HepG2 (cell line): ENCODE measurements at regions of chr17 and their contacts with region 1.

Region 1: DNA sequence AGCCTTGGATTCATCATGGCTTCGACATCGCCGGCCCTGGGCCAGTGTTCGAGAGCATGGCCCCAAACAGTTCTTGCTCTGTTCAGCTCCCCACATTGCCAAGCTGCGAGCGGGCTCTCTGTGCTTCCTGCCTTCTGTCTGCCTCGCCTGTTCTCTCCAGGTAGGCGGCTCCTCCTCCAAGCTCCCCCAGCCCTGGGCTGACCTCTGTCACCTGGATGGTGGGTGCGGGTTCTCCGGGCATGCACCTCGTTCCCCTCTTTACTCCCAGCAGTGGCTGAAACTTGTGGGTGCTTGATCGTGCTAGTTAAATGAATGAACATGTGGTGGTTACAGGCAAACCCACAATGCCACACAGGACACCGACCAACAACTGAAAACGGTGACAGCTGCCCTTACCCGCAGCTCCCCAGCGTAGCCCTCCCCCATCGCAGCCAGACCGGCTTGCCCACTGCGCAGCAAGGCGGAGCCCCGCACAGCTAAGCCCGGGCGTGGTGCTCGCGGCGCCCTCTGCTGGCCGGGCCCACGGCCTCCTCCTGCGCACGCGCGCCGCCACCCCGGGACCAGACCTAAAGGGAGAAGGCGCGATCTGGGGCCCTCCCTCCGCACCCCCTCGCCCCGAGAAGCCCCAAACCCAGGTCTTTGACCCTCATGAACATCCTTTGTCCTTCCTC is 23.0 kb upstream of the EIF1 start:
- DNase-seq: peak; percentile 68
- ATAC-seq: peak; percentile 87
- H3K4me3 ChIP-seq: peak overlapping the region; percentile 54 to 80 (median 55)
- H3K27ac ChIP-seq: no peak overlapping the region
- H3K4me1 ChIP-seq: peaks cover 47% of the 10 kb centered on the region
- H3K27me3 ChIP-seq: peaks cover 0 to 16% of the 10 kb centered on the region in 2 experiments; a peak in 2 of 5 replicates
- CTCF ChIP-seq: peak; percentile 96
- EP300 ChIP-seq: no peak
- POLR2A ChIP-seq: peak in 1 of 2 experiments; percentile 66; a peak in 2 of 4 replicates
- RAD21 ChIP-seq: peak; percentile 54

Region 2: GRCh38 chr17:40615295-40615988 is 1050.3 kb before region 1 on chr17:
- CTCF ChIA-PET with region 1: interaction called, 8 read pairs
- POLR2A ChIA-PET with region 1: interaction called, 3 read pairs
- in situ Hi-C with region 1: loop called (anchors 5 kb)
- intact Hi-C with region 1: loop called (anchors 10 kb)
- DNase-seq: peak; percentile 76
- ATAC-seq: peak; percentile 85
- H3K4me3 ChIP-seq: no peak overlapping the region
- H3K27ac ChIP-seq: no peak overlapping the region
- H3K4me1 ChIP-seq: peaks cover 55% of the 10 kb centered on the region
- H3K27me3 ChIP-seq: peaks cover 1 to 20% of the 10 kb centered on the region in 2 experiments; a peak in 3 of 5 replicates
- CTCF ChIP-seq: peak; percentile 96
- EP300 ChIP-seq: no peak
- POLR2A ChIP-seq: no peak
- RAD21 ChIP-seq: peak; percentile 95

Region 3: DNA sequence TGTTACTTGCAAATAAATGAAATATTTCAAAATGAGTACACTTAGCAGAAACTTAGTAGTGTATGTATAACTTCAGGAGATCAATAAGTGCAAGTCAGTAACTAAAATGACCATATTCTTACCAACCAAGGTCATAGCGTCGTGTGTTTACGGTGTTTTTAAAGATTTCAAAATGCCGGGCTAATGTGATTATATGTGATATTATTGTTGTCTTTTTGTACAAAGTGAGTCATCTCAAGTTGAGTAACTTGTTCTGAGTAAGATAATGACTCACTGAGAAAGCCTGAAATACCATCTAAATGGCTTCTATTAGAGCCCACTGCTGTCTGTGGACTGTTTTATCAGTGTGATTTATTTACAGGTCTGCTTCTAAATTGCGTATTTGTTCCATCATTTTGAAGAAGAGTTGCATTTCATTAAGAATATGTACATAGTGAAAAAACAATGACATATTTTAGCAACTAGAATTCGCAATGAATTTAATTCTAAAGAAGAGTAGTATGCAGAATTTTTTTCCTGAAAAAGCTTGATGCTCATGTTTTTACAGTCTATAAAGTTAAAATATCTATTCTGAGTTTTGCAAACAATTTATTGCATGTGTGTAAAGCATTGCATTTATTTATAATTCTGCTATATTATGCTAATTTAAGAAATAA is 811.4 kb before region 1 on chr17:
- CTCF ChIA-PET with region 1: interaction called, 12 read pairs
- POLR2A ChIA-PET with region 1: interaction called, 3 read pairs
- in situ Hi-C with region 1: no loop called
- intact Hi-C with region 1: no loop called
- DNase-seq: peak; percentile 55
- ATAC-seq: peak; percentile 46; the same call in 1 of the 3 replicates
- H3K4me3 ChIP-seq: no peak overlapping the region
- H3K27ac ChIP-seq: no peak overlapping the region
- H3K4me1 ChIP-seq: peaks cover 10% of the 10 kb centered on the region; the same call in 1 of the 2 replicates
- H3K27me3 ChIP-seq: 0 out of 5 replicates have a peak, but pooled peaks cover 0 to 3% of the 10 kb centered on the region in 2 experiments
- CTCF ChIP-seq: no peak
- EP300 ChIP-seq: peak in 1 of 2 experiments; percentile 66; a peak in 2 of 4 replicates
- POLR2A ChIP-seq: no peak
- RAD21 ChIP-seq: no peak

Region 4: DNA sequence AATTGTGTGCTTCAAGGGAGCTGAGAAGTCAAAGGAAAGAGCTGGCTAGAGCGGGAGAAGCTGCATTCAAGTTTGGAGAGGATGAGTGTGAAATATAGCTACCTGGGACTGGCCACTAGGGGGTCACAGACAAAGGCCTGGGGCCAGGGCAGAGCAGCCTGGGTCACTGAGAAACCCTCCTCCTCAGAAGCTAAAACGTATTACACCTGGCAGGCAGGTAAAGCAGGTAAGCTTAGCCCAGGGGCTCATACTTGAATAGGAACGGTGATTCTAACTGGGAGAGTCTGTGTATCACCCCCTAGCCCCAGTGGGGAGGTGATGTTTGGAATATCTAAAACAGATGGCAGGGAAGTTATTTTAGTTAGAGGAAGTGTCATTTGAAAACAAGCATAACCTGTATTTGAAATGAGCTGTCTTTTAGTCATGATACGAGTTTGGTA is 248.1 kb before region 1 on chr17:
- CTCF ChIA-PET with region 1: no interaction called
- POLR2A ChIA-PET with region 1: no interaction called
- in situ Hi-C with region 1: no loop called
- intact Hi-C with region 1: loop called (anchors 5 kb)
- DNase-seq: peak; percentile 30
- ATAC-seq: peak; percentile 69
- H3K4me3 ChIP-seq: no peak overlapping the region
- H3K27ac ChIP-seq: no peak overlapping the region
- H3K4me1 ChIP-seq: peaks cover 62% of the 10 kb centered on the region
- H3K27me3 ChIP-seq: no peaks in the 10 kb centered on the region
- CTCF ChIP-seq: peak; percentile 58
- EP300 ChIP-seq: no peak
- POLR2A ChIP-seq: no peak
- RAD21 ChIP-seq: peak; percentile 21; the same call in 1 of the 2 replicates

Region 5: GRCh38 chr17:41579484-41580243 is 86.0 kb before region 1 on chr17:
- CTCF ChIA-PET with region 1: interaction called, 10 read pairs
- POLR2A ChIA-PET with region 1: no interaction called
- in situ Hi-C with region 1: no loop called
- intact Hi-C with region 1: no loop called
- DNase-seq: peak; percentile 85
- ATAC-seq: peak; percentile 89
- H3K4me3 ChIP-seq: no peak overlapping the region
- H3K27ac ChIP-seq: no peak overlapping the region
- H3K4me1 ChIP-seq: no peaks in the 10 kb centered on the region
- H3K27me3 ChIP-seq: peaks cover 0 to 4% of the 10 kb centered on the region in 2 experiments; a peak in 2 of 5 replicates
- CTCF ChIP-seq: peak; percentile 90
- EP300 ChIP-seq: no peak
- POLR2A ChIP-seq: no peak
- RAD21 ChIP-seq: peak; percentile 59

Region 6: DNA sequence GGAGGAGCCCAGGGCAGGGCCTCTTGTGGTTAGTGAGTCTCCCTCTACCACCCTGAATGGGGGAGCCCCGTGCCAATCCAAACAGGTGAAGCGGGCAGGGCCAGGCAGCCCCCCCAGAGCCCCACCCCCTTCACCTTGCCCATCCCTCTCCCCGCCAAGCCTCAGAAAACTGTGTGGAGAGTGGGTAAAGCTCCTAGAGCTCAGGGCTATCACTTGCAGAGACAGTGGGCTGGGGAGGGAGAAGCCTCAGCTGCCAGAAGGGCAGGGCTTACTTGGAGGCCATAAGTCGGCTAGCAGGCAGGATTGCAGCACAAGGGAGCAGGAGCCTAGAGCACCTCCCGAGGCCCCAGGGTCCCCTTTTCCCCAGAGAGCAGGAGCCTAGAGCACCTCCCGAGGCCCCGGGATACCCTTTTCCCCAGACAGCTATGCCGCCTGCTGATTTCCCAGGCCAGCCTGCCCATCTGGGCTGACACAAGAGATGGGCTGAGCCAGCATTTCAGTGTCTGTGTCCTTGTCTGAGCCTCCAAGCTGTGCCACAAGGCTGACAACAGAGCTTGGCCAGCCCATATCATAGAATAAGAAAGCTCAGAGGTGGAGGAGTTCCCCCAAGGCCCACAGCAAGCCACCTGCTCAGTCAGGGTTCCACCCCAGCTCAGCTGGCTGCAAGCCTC is 72.3 kb before region 1 on chr17:
- CTCF ChIA-PET with region 1: interaction called, 12 read pairs
- POLR2A ChIA-PET with region 1: no interaction called
- in situ Hi-C with region 1: no loop called
- intact Hi-C with region 1: loop called (anchors 10 kb)
- DNase-seq: no peak
- ATAC-seq: no peak; the same call in 2 of the 3 replicates
- H3K4me3 ChIP-seq: no peak overlapping the region
- H3K27ac ChIP-seq: no peak overlapping the region
- H3K4me1 ChIP-seq: no peaks in the 10 kb centered on the region
- H3K27me3 ChIP-seq: peaks cover 4 to 42% of the 10 kb centered on the region in 2 experiments; a peak in 3 of 5 replicates
- CTCF ChIP-seq: no peak
- EP300 ChIP-seq: no peak
- POLR2A ChIP-seq: no peak
- RAD21 ChIP-seq: no peak

Region 7: GRCh38 chr17:41625602-41626001 is 40.1 kb before region 1 on chr17:
- CTCF ChIA-PET with region 1: no interaction called
- POLR2A ChIA-PET with region 1: no interaction called
- in situ Hi-C with region 1: no loop called
- intact Hi-C with region 1: no loop called
- DNase-seq: no peak
- ATAC-seq: no peak
- H3K4me3 ChIP-seq: no peak overlapping the region
- H3K27ac ChIP-seq: no peak overlapping the region
- H3K4me1 ChIP-seq: no peaks in the 10 kb centered on the region; the same call in 1 of the 2 replicates
- H3K27me3 ChIP-seq: peaks cover 9 to 47% of the 10 kb centered on the region in 2 experiments; a peak in 4 of 5 replicates
- CTCF ChIP-seq: no peak
- EP300 ChIP-seq: no peak
- POLR2A ChIP-seq: no peak
- RAD21 ChIP-seq: no peak

Region 8: GRCh38 chr17:41648411-41649195 is 17.1 kb before region 1 on chr17:
- CTCF ChIA-PET with region 1: interaction called, 242 read pairs
- POLR2A ChIA-PET with region 1: interaction called, 4 read pairs
- in situ Hi-C with region 1: no loop called
- intact Hi-C with region 1: loop called (anchors 1 kb)
- DNase-seq: peak; percentile 75
- ATAC-seq: peak; percentile 89
- H3K4me3 ChIP-seq: peak overlapping the region; percentile 4 to 66 (median 37); a peak in 3 of 6 replicates
- H3K27ac ChIP-seq: no peak overlapping the region
- H3K4me1 ChIP-seq: peaks cover 33% of the 10 kb centered on the region
- H3K27me3 ChIP-seq: peaks cover 5 to 20% of the 10 kb centered on the region in 2 experiments; a peak in 3 of 5 replicates
- CTCF ChIP-seq: peak; percentile 98
- EP300 ChIP-seq: no peak
- POLR2A ChIP-seq: no peak
- RAD21 ChIP-seq: peak; percentile 83